WTC11 (cell line): ENCODE measurements at regions of chr1 and their contacts with region 1.

Region 1: GRCh38 chr1:205485338-205486228 is 18.9 kb upstream of the CDK18 start:
- DNase-seq: peak; percentile 81
- ATAC-seq: peak; percentile 75
- H3K4me3 Mint-ChIP-seq: no peak overlapping the region
- H3K27ac Mint-ChIP-seq: no peak overlapping the region
- H3K4me1 Mint-ChIP-seq: peaks cover 33% of the 10 kb centered on the region
- H3K27me3 Mint-ChIP-seq: peaks cover 28% of the 10 kb centered on the region
- CTCF ChIP-seq: peak; percentile 98

Region 2: DNA sequence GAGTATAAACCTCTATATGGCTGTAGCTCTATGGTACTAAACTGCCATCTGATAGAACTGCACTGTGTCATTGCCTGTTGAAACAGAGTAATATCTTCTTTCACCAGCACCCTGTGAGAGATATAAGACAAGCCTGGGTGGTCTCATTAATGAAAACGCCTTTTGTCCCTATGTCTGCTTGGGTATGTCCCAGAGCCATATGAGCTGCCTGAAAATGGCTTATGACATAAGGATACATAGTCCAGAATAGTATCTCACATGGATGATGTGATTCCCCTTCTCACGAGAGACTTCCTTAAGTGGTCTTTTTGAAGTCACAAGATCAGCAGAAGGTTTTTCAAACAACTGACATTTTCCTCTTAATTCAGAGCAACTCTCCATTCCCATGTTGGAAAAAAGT is 265.2 kb before region 1 on chr1:
- CTCF ChIA-PET with region 1: no interaction called
- POLR2A ChIA-PET with region 1: no interaction called
- DNase-seq: no peak
- ATAC-seq: no peak
- H3K4me3 Mint-ChIP-seq: no peak overlapping the region
- H3K27ac Mint-ChIP-seq: no peak overlapping the region
- H3K4me1 Mint-ChIP-seq: peaks cover 5% of the 10 kb centered on the region
- H3K27me3 Mint-ChIP-seq: no peaks in the 10 kb centered on the region
- CTCF ChIP-seq: no peak

Region 3: GRCh38 chr1:205335643-205336091 is 149.9 kb before region 1 on chr1:
- CTCF ChIA-PET with region 1: interaction called, 33 read pairs
- POLR2A ChIA-PET with region 1: no interaction called
- DNase-seq: peak; percentile 87
- ATAC-seq: peak; percentile 87
- H3K4me3 Mint-ChIP-seq: no peak overlapping the region
- H3K27ac Mint-ChIP-seq: no peak overlapping the region
- H3K4me1 Mint-ChIP-seq: peaks cover 21% of the 10 kb centered on the region
- H3K27me3 Mint-ChIP-seq: peaks cover 9% of the 10 kb centered on the region
- CTCF ChIP-seq: peak; percentile 60; the same call in 1 of the 2 replicates

Region 4: GRCh38 chr1:205396967-205397616 is 88.5 kb before region 1 on chr1:
- CTCF ChIA-PET with region 1: interaction called, 118 read pairs
- POLR2A ChIA-PET with region 1: interaction called, 4 read pairs
- DNase-seq: peak; percentile 41
- ATAC-seq: peak; percentile 93
- H3K4me3 Mint-ChIP-seq: no peak overlapping the region
- H3K27ac Mint-ChIP-seq: no peak overlapping the region
- H3K4me1 Mint-ChIP-seq: peaks cover 6% of the 10 kb centered on the region
- H3K27me3 Mint-ChIP-seq: peaks cover 13% of the 10 kb centered on the region
- CTCF ChIP-seq: peak; percentile 71

Region 5: GRCh38 chr1:205440476-205441317 is 44.9 kb before region 1 on chr1:
- CTCF ChIA-PET with region 1: interaction called, 210 read pairs
- POLR2A ChIA-PET with region 1: interaction called, 8 read pairs
- DNase-seq: peak; percentile 53
- ATAC-seq: peak; percentile 16
- H3K4me3 Mint-ChIP-seq: no peak overlapping the region
- H3K27ac Mint-ChIP-seq: no peak overlapping the region; the same call in 1 of the 2 replicates
- H3K4me1 Mint-ChIP-seq: peaks cover 91% of the 10 kb centered on the region
- H3K27me3 Mint-ChIP-seq: peaks cover 27% of the 10 kb centered on the region
- CTCF ChIP-seq: no peak

Region 6: DNA sequence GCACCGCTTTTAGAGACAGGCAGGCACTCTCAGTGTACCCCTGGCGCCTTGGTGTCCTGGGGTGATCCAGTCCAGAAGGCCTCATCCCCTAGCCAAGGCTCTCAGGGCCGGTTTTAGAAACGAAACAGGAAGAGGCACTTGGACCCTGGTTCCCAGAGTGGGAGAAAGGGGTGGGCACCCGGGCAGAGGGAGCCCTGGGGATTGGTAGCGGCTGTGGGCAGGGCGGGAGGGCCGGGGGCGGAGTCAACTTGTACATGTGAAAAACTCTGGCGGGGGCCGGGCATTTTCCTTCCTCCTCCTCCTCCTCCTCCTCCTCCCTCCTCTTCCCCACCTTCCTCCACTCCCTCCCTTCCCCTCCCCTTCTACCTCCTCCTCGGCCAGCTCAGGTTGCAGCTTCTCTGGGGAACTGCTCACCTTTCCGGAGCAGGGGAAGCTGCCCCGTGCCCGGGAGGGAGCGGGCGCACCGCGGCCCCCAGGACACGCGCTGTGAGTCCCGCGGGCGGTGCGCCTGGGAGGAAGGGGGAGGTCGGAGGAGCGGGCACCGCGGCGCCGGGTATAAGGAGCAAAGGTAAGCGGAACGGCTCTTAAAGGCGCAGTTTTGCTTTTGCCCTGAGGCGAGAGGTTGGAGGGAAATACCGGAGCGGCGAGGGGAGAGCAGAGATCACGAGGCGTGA is 18.9 kb after region 1 on chr1 and contains the start of gene CDK18:
- CTCF ChIA-PET with region 1: interaction called, 13 read pairs
- POLR2A ChIA-PET with region 1: interaction called, 4 read pairs
- DNase-seq: peak; percentile 85
- ATAC-seq: peak; percentile 80
- H3K4me3 Mint-ChIP-seq: peak within 1 kb of the TSS; percentile 85
- H3K27ac Mint-ChIP-seq: peak within 1 kb of the TSS; percentile 19; the same call in 1 of the 2 replicates
- H3K4me1 Mint-ChIP-seq: peaks cover 57% of the 10 kb centered on the region
- H3K27me3 Mint-ChIP-seq: no peaks in the 10 kb centered on the region
- CTCF ChIP-seq: no peak
- total RNA-seq, gene CDK18: 62.1 to 71.9 TPM (median 64.7 TPM) in 3 replicates

Region 7: GRCh38 chr1:205591522-205592351 is 106.2 kb after region 1 on chr1:
- CTCF ChIA-PET with region 1: interaction called, 10 read pairs
- POLR2A ChIA-PET with region 1: no interaction called
- DNase-seq: peak; percentile 97
- ATAC-seq: peak; percentile 86
- H3K4me3 Mint-ChIP-seq: peak overlapping the region; percentile 72
- H3K27ac Mint-ChIP-seq: peak overlapping the region; percentile 50; the same call in 1 of the 2 replicates
- H3K4me1 Mint-ChIP-seq: peaks cover 8% of the 10 kb centered on the region
- H3K27me3 Mint-ChIP-seq: peaks cover 10% of the 10 kb centered on the region
- CTCF ChIP-seq: peak; percentile 78

Region 8: GRCh38 chr1:205631727-205632373 is 146.3 kb after region 1 on chr1 and contains the start of gene ELK4:
- CTCF ChIA-PET with region 1: no interaction called
- POLR2A ChIA-PET with region 1: no interaction called
- DNase-seq: peak; percentile 99
- ATAC-seq: peak; percentile 89
- H3K4me3 Mint-ChIP-seq: peak within 1 kb of the TSS; percentile 96
- H3K27ac Mint-ChIP-seq: peak within 1 kb of the TSS; percentile 100
- H3K4me1 Mint-ChIP-seq: peaks cover 27% of the 10 kb centered on the region
- H3K27me3 Mint-ChIP-seq: no peaks in the 10 kb centered on the region
- CTCF ChIP-seq: no peak
- total RNA-seq, gene ELK4: 34.4 to 39.0 TPM (median 37.5 TPM) in 3 replicates